ENCODE measurements at regions of chrX and their contacts with region 1.

Region 1: DNA sequence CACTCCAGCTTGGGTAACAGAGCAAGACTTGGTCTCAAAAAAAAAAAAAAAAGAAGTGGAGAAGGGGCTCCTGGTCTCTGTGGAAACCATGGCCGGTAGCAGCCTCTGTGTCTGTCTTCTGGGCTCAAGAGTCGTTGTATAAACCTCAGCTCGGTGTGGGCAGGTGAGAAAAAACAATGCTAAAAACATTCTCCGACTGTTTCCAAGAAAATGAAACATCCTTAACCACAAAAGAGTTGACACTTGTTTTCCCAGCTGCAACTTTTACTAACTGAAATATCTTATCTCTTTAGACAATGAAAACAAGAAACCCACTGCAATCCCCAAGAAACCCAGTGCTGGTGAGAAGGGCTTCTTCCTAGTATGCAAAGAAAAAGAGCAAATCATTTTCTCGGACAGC is 26.2 kb downstream of the CD99 start:
- DNase-seq: no peak
- H3K4me3 ChIP-seq: no peak overlapping the region
- H3K4me3 Mint-ChIP-seq: no peak overlapping the region
- H3K27ac ChIP-seq: no peak overlapping the region
- H3K27ac Mint-ChIP-seq: peak overlapping the region in 3 of 7 donors; percentile 30 to 67 (median 42)
- H3K4me1 ChIP-seq: no peaks in the 10 kb centered on the region
- H3K4me1 Mint-ChIP-seq: peaks cover 2% of the 10 kb centered on the region
- H3K27me3 ChIP-seq: no peaks in the 10 kb centered on the region
- H3K27me3 Mint-ChIP-seq: no peaks in the 10 kb centered on the region
- CTCF ChIP-seq: no peak

Region 2: DNA sequence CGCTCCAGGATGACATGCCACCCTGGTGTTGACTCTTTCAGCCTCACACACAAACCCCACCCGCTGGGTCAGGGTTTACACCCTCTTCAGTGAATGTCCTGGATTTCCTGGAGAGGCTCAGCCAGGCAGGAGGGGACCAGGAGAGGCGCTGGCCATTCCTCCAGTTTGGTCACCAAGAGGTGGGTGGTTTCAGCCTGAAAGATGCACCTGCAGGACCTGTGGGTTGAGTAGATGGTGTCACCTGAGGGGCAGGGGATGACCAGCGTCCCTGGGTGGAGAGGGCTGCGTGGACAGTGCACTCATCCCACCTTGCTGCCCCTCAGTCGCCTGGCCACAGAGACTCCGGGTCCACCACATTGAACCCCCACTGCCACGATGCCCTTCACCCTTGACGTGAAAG is 922.7 kb before region 1 on chrX:
- intact Hi-C with region 1: no loop called
- DNase-seq: no peak
- H3K4me3 ChIP-seq: no peak overlapping the region
- H3K4me3 Mint-ChIP-seq: no peak overlapping the region
- H3K27ac ChIP-seq: no peak overlapping the region
- H3K27ac Mint-ChIP-seq: no peak overlapping the region
- H3K4me1 ChIP-seq: no peaks in the 10 kb centered on the region
- H3K4me1 Mint-ChIP-seq: no peaks in the 10 kb centered on the region
- H3K27me3 ChIP-seq: no peaks in the 10 kb centered on the region
- H3K27me3 Mint-ChIP-seq: peaks cover 2 to 5% (median 5%) of the 10 kb centered on the region in 3 donors
- CTCF ChIP-seq: no peak

Region 3: DNA sequence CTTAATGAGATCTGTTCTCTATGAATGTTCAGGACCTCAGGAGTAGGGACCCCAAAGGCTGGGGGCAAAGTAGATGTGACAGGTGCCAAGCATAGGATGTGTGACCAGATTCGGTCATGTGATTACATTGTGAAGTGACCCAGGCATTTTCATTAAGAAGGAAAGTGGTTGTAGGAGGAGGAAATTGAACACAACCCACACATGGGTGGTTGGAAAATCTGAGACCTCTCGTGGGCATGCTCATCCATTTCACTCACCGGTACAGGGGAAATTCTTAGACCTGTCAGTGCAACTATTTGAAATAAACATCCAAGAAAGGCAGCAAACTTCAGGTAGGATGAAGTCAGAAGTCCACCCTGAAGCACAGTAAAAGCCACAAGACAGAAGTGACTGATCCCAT is 69.7 kb before region 1 on chrX:
- intact Hi-C with region 1: loop called in 1 of 2 experiments (anchors 5 kb)
- DNase-seq: no peak
- H3K4me3 ChIP-seq: no peak overlapping the region
- H3K4me3 Mint-ChIP-seq: no peak overlapping the region
- H3K27ac ChIP-seq: no peak overlapping the region
- H3K27ac Mint-ChIP-seq: peak overlapping the region in 1 of 7 donors; percentile 23
- H3K4me1 ChIP-seq: peaks cover 13 to 14% of the 10 kb centered on the region in 2 donors
- H3K4me1 Mint-ChIP-seq: peaks cover 19% of the 10 kb centered on the region
- H3K27me3 ChIP-seq: no peaks in the 10 kb centered on the region
- H3K27me3 Mint-ChIP-seq: peaks cover 0 to 2% (median 0%) of the 10 kb centered on the region in 3 donors
- CTCF ChIP-seq: no peak

Measured in CD14-positive monocyte (primary cell).